Thyroid gland (tissue), 4 donors: ENCODE measurements at regions of chr7 and their contacts with region 1.

Region 1: DNA sequence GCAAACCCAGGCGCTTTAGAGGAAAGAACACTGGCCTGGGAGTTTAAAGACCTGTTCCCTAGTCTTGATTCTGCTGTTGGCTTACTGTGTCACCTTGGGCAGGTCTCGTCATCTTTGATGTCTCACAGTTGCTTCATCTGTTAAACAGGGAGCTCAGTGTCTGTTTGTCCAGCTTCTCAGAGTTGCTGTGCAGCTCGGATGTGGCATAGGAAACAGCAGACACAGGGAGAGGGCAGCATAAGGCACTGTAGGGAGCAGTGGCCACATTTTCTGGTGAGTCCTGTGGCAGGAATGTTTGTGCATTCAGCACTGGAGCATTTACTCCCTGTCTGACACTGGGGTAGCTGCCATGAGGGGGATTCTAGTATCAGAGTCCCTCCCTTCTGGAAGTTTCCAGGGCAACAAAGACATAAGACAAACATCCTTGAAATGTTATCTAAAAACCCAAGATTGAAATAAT is 2.0 kb downstream of the REPIN1 start:
- DNase-seq: no peak
- H3K4me3 ChIP-seq: no peak overlapping the region
- H3K27ac ChIP-seq: no peak overlapping the region
- H3K4me1 ChIP-seq: peaks cover 20 to 38% of the 10 kb centered on the region in 2 donors
- H3K27me3 ChIP-seq: no peaks in the 10 kb centered on the region
- CTCF ChIP-seq: no peak
- POLR2A ChIP-seq: no peak

Region 2: GRCh38 chr7:150404805-150405583 is 34.4 kb after region 1 on chr7:
- intact Hi-C with region 1: loop called (anchors 5 kb)
- DNase-seq: peak; percentile 90 to 92
- H3K4me3 ChIP-seq: peak overlapping the region; percentile 35 to 77 (median 40)
- H3K27ac ChIP-seq: peak overlapping the region; percentile 90 to 95 (median 94)
- H3K4me1 ChIP-seq: peaks cover 42 to 64% of the 10 kb centered on the region in 2 donors
- H3K27me3 ChIP-seq: no peaks in the 10 kb centered on the region
- CTCF ChIP-seq: peak in 3 of 6 experiments; percentile 3 to 28 (median 20)
- POLR2A ChIP-seq: peak; percentile 22 to 82

Region 3: GRCh38 chr7:151658778-151659177 is 1288.1 kb after region 1 on chr7:
- intact Hi-C with region 1: no loop called
- DNase-seq: no peak
- H3K4me3 ChIP-seq: no peak overlapping the region
- H3K27ac ChIP-seq: peak overlapping the region in 1 of 3 donors; percentile 45
- H3K4me1 ChIP-seq: peaks cover 14 to 30% of the 10 kb centered on the region in 2 donors
- H3K27me3 ChIP-seq: no peaks in the 10 kb centered on the region
- CTCF ChIP-seq: no peak
- POLR2A ChIP-seq: no peak